Activated naive CD4-positive, alpha-beta T cell treated with anti-CD3 and anti-CD28 coated beads for 36 hours (primary cell): ENCODE measurements at regions of chr21 and their contacts with region 1.

Region 1: DNA sequence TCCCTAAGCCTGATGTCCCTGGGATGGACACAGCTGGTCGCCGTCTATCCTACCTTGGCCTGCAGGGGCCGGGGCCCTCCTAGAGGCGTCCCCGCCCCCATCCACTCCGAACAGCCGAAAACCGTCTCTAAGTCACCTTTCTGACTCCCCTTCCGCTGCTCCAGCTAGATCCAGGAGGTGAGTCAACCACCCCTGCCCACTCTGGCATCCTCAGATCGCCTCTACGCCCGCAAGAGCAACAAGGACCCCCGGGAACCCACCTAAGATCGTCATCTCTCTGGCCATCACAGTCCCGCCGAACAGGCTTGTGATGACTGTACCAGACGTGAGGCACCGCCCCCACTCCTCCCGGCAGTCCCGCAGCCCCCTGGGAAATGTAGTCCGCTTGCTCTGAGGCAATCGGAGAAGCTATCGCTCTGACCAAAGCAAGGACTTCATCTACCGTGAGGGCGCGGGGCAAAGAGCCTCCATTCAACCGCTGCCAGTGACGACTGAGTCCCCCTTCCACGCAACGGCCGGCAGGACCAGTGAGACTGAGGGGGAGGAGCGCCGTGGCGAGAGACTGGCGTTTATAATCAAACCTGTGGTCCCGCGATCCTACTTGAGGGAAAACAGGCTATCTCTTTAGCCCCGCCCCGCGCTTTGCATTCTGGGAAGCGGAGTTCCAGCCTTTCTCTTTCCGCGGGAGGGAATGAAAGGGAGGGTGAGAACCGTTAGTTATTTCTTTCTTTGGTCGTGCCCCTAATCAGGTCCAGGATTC is at the start of gene HSPA13:
- DNase-seq: peak; percentile 100
- H3K4me3 Mint-ChIP-seq: peak within 1 kb of the TSS; percentile 100
- H3K27ac Mint-ChIP-seq: peak within 1 kb of the TSS; percentile 100
- H3K4me1 Mint-ChIP-seq: peaks cover 24% of the 10 kb centered on the region
- H3K27me3 Mint-ChIP-seq: no peaks in the 10 kb centered on the region
- total RNA-seq, gene HSPA13: 41.1 to 41.4 TPM

Region 2: DNA sequence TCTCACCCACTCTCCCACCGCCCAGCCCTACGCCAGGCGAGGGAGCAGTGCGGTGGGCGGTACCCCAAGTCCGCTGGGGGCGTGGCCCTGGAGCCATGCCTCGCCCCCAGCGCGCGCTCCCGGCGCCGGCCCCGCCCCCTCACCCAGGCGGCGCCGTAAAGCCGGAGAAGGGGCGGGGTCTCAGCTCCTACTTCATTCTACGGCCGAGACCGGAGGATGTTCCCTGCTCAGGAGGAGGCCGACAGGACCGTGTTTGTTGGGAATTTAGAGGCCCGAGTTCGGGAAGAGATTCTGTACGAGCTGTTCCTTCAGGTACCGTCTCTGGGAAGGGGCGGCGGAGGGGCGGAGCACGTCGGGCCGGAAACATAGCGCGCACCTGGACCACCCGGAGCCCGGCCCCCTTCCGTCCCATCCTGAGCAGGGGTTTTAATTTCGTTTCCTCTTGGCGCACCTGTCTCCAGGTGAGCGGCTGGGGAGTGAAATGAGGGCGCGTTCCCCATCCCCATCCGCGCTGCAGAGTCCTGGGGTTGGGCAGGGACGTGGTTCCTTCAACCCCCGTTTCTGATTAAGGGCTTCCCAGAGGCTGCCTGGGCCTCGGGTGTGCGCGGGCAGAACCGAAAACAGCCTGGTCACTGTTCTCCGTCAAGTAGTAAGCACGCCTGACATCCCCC is 166.9 kb before region 1 on chr21 and contains the start of gene RBM11:
- CTCF ChIA-PET with region 1: no interaction called
- intact Hi-C with region 1: loop called (anchors 1 kb)
- DNase-seq: peak; percentile 82
- H3K4me3 Mint-ChIP-seq: peak within 1 kb of the TSS; percentile 79
- H3K27ac Mint-ChIP-seq: no peak within 1 kb of the TSS
- H3K4me1 Mint-ChIP-seq: peaks cover 6% of the 10 kb centered on the region
- H3K27me3 Mint-ChIP-seq: peaks cover 4% of the 10 kb centered on the region
- total RNA-seq, gene RBM11: 4.9 to 5.9 TPM

Region 3: GRCh38 chr21:14482165-14482564 is 99.2 kb after region 1 on chr21:
- CTCF ChIA-PET with region 1: no interaction called
- intact Hi-C with region 1: loop called (anchors 2 kb)
- DNase-seq: peak; percentile 55
- H3K4me3 Mint-ChIP-seq: peak overlapping the region; percentile 1
- H3K27ac Mint-ChIP-seq: peak overlapping the region; percentile 90
- H3K4me1 Mint-ChIP-seq: peaks cover 61% of the 10 kb centered on the region
- H3K27me3 Mint-ChIP-seq: no peaks in the 10 kb centered on the region

Region 4: DNA sequence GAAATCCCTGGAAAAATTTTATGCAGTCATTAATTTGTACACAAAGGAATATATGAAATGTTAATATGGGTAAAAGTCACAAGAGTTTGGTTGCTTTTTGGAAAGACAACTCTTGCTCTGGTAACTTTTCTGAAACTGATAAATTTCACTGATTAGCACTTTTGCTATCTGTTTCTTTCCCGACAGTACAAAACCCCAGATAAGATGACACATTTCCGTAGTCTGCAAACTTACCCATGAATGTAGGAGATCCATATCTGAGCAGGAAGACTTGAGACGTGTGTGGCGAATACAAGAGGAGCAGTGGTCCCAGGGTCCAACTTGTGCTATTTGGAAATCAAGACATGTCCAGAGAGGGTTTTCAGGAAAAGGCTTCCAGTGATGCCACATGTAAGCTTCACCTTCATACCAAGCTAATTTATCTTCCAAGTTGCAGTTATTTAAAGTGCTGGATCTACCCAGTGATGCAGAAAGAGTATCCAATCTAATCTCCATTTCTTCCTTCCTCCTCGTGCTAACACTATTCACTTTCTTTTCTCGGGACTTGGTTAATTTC is 199.0 kb after region 1 on chr21:
- CTCF ChIA-PET with region 1: no interaction called
- intact Hi-C with region 1: loop called (anchors 5 kb)
- DNase-seq: no peak
- H3K4me3 Mint-ChIP-seq: peak overlapping the region; percentile 20
- H3K27ac Mint-ChIP-seq: no peak overlapping the region
- H3K4me1 Mint-ChIP-seq: peaks cover 13% of the 10 kb centered on the region
- H3K27me3 Mint-ChIP-seq: no peaks in the 10 kb centered on the region

Region 5: DNA sequence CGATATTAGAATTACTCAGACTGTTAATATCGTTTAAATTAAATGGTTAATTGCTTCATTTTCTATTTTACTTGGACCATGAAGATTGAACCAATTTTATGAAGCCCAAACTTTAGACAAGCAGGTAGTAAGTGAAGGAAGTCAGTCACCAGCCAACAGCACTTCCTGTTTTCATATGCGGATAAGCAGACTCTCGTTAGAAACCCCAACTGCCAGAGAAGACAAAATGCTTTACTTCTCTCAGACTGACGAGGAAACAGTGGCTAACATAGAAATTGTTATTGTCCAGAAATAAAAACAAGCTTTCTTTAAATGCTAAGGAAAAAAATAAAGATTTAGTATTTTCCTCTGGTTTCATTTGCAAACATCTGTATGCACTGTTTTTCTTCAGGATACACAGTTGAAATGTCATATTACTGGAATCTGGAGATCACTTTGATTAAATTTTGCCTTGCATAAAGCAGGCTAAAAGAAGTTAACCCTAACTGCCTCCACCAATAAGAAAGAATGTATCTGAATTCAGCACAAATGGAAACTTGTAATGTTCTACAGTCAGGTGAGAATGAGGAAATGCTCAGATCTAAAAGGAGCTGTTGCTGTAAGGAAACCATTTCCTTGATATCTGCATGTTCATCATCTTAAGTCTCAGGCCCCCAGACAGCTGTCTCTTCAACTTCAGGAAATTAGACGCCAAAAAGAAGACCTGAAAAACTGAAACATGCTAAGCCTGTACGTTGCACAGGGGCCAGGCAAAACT is 292.9 kb after region 1 on chr21:
- CTCF ChIA-PET with region 1: no interaction called
- intact Hi-C with region 1: loop called (anchors 1 kb)
- DNase-seq: peak; percentile 28
- H3K4me3 Mint-ChIP-seq: peak overlapping the region; percentile 63
- H3K27ac Mint-ChIP-seq: peak overlapping the region; percentile 91
- H3K4me1 Mint-ChIP-seq: peaks cover 40% of the 10 kb centered on the region
- H3K27me3 Mint-ChIP-seq: no peaks in the 10 kb centered on the region

Region 6: DNA sequence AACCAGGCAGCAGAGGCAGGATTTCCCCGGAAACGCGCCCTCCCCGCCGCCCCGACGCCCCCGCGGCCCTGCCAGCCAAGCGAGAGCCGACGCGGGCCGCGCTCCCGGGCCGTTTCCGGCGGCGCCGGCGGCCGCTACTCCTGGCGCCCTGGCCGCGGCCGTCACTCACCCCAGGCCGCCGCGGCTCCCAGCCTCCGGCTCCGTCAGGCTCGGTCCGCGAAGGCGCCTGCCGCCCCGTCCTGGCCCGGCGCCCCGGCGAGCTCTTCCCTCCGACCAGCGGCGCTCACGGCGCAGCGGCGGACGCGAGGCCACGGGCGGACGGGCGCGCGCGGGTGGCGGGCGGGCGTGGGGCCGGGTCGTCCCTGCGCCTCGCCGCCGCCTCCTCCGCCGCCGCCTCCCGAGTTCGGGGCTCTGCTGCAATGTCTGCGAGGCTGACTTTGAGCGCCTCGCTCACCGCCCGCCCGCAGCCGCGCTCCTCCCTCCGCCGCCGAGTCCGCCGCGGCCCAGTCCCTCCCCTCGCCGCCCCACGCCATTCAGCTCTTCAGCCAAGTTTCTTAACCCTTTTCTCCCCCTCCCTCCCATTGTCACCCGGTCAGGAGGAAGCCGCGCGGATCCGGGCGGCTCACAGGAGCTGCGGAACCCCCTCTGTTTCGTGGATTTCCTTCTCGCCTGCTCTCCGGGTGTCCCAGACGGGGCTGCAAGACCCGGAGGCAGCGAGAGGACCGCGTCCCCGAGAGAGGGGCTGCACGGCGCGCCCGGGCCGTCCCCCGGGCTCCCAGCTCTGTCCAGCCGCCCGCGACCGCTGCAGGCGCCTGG is 681.8 kb after region 1 on chr21 and contains the start of gene NRIP1:
- CTCF ChIA-PET with region 1: no interaction called
- intact Hi-C with region 1: loop called (anchors 1 kb)
- DNase-seq: peak; percentile 71
- H3K4me3 Mint-ChIP-seq: peak within 1 kb of the TSS; percentile 90
- H3K27ac Mint-ChIP-seq: peak within 1 kb of the TSS; percentile 94
- H3K4me1 Mint-ChIP-seq: peaks cover 36% of the 10 kb centered on the region
- H3K27me3 Mint-ChIP-seq: no peaks in the 10 kb centered on the region
- total RNA-seq, gene NRIP1: 6.1 to 6.5 TPM

Region 7: DNA sequence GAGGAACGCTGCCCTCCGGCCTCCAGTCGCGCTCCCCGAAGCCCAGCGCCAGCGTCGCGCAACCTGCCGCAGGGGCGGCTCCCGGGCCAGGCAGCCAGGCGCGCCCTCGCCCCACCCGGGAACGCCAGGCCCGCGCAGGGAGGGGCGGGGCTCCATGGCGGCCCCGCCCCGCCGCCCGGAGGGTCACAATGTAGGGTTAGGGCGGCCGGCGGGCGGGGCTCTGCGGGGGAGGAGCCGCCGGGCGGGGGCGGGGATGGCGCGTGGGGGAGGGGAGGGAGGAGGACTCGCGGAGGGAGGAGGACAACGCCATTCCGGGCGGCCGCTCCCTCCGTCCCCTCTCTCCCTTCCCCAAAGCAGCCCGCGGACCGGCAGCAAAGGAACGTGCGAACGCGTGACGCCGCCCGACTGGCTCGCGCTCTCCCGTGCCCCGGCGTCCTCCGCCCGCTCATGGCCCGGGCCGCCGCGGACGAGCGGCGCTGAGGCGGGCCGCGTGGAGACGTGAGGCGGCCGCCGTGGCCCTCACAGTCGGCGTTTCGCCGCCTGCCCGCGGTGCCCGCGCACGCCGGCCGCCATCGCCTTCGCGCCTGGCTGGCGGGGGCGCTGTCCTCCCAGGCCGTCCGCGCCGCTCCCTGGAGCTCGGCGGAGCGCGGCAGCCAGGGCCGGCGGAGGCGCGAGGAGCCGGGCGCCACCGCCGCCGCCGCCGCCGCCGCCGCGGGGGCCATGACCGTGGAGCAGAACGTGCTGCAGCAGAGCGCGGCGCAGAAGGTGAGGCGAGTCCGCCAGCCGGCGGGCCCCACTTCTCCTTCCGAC is 1346.9 kb after region 1 on chr21 and contains the start of gene USP25:
- CTCF ChIA-PET with region 1: no interaction called
- intact Hi-C with region 1: loop called (anchors 5 kb)
- DNase-seq: peak; percentile 77
- H3K4me3 Mint-ChIP-seq: peak within 1 kb of the TSS; percentile 91
- H3K27ac Mint-ChIP-seq: peak within 1 kb of the TSS; percentile 83
- H3K4me1 Mint-ChIP-seq: peaks cover 24% of the 10 kb centered on the region
- H3K27me3 Mint-ChIP-seq: peaks cover 2% of the 10 kb centered on the region
- total RNA-seq, gene USP25: 24.7 to 27.8 TPM